ENCODE measurements at regions of chr5 and their contacts with region 1.

Region 1: GRCh38 chr5:75574791-75575190 is 36.5 kb upstream of the ANKDD1B start:
- DNase-seq: no peak
- ATAC-seq: no peak
- H3K4me3 Mint-ChIP-seq: peak overlapping the region; percentile 76
- H3K27ac Mint-ChIP-seq: peak overlapping the region; percentile 86
- H3K4me1 Mint-ChIP-seq: peaks cover 37% of the 10 kb centered on the region
- H3K27me3 Mint-ChIP-seq: no peaks in the 10 kb centered on the region
- CTCF ChIP-seq: no peak

Region 2: DNA sequence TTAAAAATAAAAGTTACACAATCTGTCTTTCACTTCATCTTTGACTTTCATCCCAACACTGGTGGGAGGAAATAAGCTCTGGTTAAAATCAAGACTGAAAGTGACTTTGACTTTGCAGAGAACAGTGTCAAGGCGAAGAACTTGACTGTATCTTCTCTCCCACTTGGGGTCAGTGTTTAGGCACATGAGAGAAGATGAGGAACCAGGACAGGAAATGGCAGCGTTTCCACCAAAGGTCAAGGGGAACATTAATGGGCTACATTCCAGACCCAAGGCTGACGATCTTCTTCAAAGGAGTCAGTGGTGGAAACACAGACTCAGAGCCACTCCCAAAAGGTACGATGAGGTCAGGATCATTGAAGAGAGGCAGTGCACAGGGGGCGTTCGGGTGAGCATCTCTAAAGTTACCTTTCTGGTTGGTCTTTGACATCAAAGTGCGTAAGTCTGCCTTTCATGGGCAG is 1539.2 kb before region 1 on chr5:
- CTCF ChIA-PET with region 1: no interaction called
- POLR2A ChIA-PET with region 1: no interaction called
- intact Hi-C with region 1: no loop called
- DNase-seq: no peak
- ATAC-seq: no peak
- H3K4me3 Mint-ChIP-seq: no peak overlapping the region
- H3K27ac Mint-ChIP-seq: no peak overlapping the region
- H3K4me1 Mint-ChIP-seq: no peaks in the 10 kb centered on the region
- H3K27me3 Mint-ChIP-seq: peaks cover 5% of the 10 kb centered on the region
- CTCF ChIP-seq: no peak

Region 3: GRCh38 chr5:75558981-75559632 is 15.7 kb before region 1 on chr5:
- CTCF ChIA-PET with region 1: no interaction called
- POLR2A ChIA-PET with region 1: no interaction called
- intact Hi-C with region 1: loop called (anchors 2 kb)
- DNase-seq: no peak
- ATAC-seq: no peak
- H3K4me3 Mint-ChIP-seq: no peak overlapping the region
- H3K27ac Mint-ChIP-seq: no peak overlapping the region
- H3K4me1 Mint-ChIP-seq: peaks cover 5% of the 10 kb centered on the region
- H3K27me3 Mint-ChIP-seq: no peaks in the 10 kb centered on the region
- CTCF ChIP-seq: no peak

Measured in activated B cell treated with CpG ODN at 0.5 μM for 24 hours (primary cell).